Activated T-helper 1 cell treated with anti-CD3 and anti-CD28 coated beads, Interleukin-12 subunit alpha, Interleukin-12 subunit beta, Interleukin-2, Interleukin-4 antibody, amounts not matched to agents 30 ng/mL and 10 ng/mL and 1 ng/mL, durations not matched to agents 14 hours and 24 hours and 36 hours (primary cell): ENCODE measurements at regions of chr9 and their contacts with region 1.

Region 1: DNA sequence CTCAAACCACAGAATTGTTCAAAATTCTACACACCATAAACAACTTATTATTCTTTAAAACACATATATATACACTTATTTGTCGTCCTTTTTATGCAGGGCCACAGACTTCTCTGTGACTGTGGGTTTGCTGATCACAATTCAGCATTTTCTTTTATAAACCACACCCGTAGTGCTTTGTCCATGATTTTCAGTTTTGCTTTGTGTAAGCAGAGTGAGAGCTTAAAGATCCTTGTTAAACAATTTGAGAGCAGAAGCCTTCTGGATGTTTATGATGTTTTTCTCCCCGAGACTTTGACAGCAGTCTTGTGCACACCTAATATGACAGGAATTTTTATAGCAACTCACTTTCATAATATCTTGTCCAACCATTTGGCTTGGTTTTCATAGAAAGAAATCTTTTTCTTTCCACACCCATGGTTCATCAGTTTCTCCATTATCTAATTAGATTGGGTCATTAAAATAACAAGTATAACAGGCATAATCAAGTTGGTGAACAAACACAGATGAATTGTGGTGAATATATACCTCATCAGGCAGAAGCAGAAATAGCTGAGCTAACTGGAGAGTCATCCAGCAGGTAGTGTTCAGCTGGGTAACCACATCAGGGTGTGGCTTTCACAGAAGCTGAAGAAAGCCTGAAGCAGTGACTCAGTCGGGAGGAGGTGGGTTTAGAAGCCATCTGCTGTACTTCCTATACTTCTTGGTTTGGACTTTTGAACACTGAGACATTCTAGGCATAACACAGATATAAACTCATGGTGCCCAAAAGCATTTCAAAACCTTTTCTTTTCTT is 232.8 kb downstream of the DOCK8 start:
- DNase-seq: peak; percentile 74
- H3K4me3 Mint-ChIP-seq: peak overlapping the region; percentile 53
- H3K27ac Mint-ChIP-seq: peak overlapping the region; percentile 76
- H3K4me1 Mint-ChIP-seq: peaks cover 50% of the 10 kb centered on the region
- H3K27me3 Mint-ChIP-seq: no peaks in the 10 kb centered on the region

Region 2: DNA sequence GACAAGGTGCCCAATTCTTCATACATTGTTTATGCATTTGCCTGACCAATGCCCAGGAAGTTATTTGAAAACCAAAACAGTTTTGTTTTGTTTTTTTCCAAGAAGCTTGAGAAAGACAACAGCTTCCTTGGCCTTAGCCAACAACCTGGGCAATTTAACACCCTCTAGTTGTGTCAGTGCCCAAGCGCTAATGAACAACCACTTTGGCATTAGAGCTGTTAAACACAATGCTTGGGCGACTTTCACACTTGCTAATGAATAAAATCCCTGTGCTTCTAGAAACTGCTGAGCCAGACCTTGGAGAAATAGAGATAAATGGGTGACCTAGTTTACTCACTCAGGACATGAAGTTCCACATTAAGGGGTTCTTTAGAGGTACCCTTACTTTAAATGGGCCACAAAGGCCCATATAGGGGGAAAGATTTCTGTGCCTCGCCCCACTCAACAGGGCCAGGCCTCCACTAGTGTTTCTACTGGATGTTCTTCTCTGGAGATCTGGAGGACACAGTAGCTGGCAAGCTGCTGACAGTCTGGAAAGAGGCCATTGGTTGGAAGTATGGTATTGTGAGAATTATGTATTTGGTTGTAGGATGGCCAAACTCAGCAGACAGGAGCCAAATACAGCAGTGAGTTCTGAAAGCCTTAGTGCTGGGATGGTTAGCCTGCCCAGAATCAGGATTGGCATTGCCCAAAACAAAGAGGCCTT is 52.9 kb before region 1 on chr9:
- intact Hi-C with region 1: loop called (anchors 5 kb)
- DNase-seq: no peak
- H3K4me3 Mint-ChIP-seq: no peak overlapping the region
- H3K27ac Mint-ChIP-seq: no peak overlapping the region
- H3K4me1 Mint-ChIP-seq: no peaks in the 10 kb centered on the region
- H3K27me3 Mint-ChIP-seq: no peaks in the 10 kb centered on the region

Region 3: DNA sequence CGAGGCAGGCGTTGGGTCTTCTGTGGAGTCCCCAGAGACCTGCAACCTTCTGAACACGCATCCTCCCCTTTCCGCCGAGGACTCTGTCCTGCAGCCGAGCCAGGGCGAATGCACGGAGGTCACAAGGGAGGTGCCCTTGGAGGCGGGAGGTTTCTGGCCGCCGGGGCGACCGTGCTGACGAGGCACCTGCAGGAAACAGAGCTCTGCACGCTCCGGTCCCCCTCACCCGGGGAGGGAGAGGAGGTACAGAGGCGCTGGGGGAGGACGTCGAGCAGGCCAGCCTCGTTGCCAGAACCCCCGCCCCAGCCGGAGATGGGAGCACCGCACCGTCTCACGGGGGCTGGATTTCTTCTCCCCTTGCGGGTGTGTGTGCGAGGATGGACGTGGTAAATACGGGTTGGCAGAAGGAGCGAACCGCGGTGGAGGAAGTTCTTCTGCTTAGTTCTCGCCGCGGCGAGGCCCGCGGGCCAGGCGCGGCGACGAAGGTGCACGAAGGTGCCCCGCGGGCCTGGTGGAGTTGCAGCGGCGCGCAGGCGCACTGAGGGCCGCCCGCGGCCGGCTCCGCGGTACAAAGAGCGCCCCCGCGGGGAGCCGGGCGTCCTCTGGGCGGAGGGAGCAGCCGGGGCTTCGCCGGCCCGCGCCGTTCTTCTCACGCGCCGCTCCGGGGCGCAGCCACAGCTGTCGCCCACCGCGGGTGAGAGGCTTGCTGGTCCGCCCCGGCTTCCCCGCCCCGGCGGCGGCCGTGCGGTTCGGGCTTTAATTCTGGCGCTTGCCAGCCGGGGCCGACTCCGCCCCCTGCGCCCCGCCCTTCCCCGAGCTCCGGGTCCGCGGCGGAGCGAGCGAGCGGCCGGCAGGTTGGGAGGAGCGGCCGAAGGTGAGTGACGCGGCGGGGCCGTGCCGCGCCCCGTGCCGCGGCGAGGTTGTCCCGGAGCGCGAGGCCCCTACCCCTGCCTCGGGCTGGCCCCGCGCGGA is 56.7 kb after region 1 on chr9:
- intact Hi-C with region 1: loop called (anchors 10 kb)
- DNase-seq: peak; percentile 69
- H3K4me3 Mint-ChIP-seq: peak within 1 kb of the TSS; percentile 80
- H3K27ac Mint-ChIP-seq: peak within 1 kb of the TSS; percentile 73
- H3K4me1 Mint-ChIP-seq: no peaks in the 10 kb centered on the region
- H3K27me3 Mint-ChIP-seq: peaks cover 46% of the 10 kb centered on the region

Region 4: DNA sequence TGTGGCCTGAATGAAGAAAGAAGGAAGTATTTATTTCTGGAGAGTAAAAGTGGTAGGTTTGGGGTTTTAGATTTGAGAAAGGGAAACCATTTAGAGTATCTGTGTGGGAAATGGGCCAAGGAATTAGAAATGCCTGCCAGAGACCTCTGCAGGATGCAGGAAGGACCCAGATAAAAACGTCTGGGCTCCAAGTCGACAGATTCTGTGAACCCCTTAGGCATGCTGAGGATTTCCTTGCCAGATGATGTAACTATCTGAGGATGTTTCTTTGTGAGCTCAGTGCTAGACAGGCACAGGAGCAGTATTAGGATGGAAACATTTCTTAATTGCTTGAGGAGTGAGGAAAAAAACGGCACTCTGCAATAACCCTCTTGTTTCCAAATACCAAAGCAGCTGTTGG is 142.3 kb after region 1 on chr9:
- intact Hi-C with region 1: no loop called
- DNase-seq: no peak
- H3K4me3 Mint-ChIP-seq: no peak overlapping the region
- H3K27ac Mint-ChIP-seq: no peak overlapping the region
- H3K4me1 Mint-ChIP-seq: no peaks in the 10 kb centered on the region
- H3K27me3 Mint-ChIP-seq: peaks cover 11% of the 10 kb centered on the region

Region 5: DNA sequence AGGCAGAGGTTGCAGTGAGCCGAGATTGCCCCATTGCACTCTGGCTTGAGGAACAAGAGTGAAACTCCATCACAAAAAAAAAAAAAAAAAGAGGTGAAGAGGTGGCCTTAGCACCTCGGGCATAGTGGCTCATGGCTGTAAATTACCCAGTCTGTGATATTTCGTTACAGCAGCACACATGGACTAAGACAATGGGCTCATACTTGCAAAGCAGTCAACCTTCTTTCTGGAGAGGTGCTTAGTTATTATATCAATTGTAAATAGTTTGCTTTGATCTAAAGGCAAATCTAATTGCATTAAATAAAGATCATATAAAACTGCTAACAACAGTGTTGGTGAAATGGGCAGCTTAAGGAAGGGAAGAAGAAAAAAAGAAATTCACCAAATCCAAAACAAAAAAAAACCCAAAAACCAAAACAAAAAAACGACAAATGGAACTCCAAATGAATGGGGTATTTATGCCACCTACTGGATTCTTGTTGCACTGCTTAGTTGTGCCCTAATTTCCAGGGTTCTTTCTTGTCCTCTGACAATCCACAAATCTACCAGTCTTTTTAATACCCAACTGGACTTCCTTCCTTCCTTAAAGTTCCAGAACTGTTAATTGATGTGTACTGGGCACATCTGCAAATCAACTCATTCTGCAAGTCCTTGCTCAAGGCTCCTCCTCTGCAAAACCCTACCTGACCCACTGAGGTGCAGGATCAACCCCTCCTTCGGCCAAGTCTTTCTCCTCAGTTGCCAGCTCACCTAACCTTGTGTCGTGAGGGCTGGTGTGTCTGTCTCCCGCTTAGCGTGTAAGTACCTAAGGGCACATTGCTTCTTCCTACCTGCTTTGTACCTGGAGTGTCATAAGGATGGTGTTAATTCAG is 359.1 kb after region 1 on chr9:
- intact Hi-C with region 1: loop called (anchors 10 kb)
- DNase-seq: no peak
- H3K4me3 Mint-ChIP-seq: no peak overlapping the region
- H3K27ac Mint-ChIP-seq: no peak overlapping the region
- H3K4me1 Mint-ChIP-seq: no peaks in the 10 kb centered on the region
- H3K27me3 Mint-ChIP-seq: no peaks in the 10 kb centered on the region